Esophagus muscularis mucosa (tissue), 4 donors: ENCODE measurements at regions of chr12 and their contacts with region 1.

Region 1: GRCh38 chr12:2944401-2945047 is 14.7 kb upstream of the TEAD4 start:
- DNase-seq: no peak
- H3K4me3 ChIP-seq: no peak overlapping the region
- H3K27ac ChIP-seq: peak overlapping the region in 1 of 4 donors; percentile 24
- H3K4me1 ChIP-seq: peaks cover 6 to 12% (median 11%) of the 10 kb centered on the region in 4 donors
- H3K27me3 ChIP-seq: no peaks in the 10 kb centered on the region
- CTCF ChIP-seq: peak; percentile 63 to 78 (median 66)
- EP300 ChIP-seq: no peak
- POLR2A ChIP-seq: no peak

Region 2: GRCh38 chr12:2879853-2880252 is 64.7 kb before region 1 on chr12:
- intact Hi-C with region 1: loop called (anchors 5 kb)
- DNase-seq: no peak
- H3K4me3 ChIP-seq: no peak overlapping the region
- H3K27ac ChIP-seq: no peak overlapping the region
- H3K4me1 ChIP-seq: peaks cover 6 to 31% (median 21%) of the 10 kb centered on the region in 4 donors
- H3K27me3 ChIP-seq: no peaks in the 10 kb centered on the region
- CTCF ChIP-seq: no peak
- EP300 ChIP-seq: no peak
- POLR2A ChIP-seq: no peak